ENCODE measurements at regions of chr1 and their contacts with region 1.

Region 1: GRCh38 chr1:70290218-70290617 is 64.3 kb downstream of the ANKRD13C start:
- DNase-seq: no peak

Region 2: DNA sequence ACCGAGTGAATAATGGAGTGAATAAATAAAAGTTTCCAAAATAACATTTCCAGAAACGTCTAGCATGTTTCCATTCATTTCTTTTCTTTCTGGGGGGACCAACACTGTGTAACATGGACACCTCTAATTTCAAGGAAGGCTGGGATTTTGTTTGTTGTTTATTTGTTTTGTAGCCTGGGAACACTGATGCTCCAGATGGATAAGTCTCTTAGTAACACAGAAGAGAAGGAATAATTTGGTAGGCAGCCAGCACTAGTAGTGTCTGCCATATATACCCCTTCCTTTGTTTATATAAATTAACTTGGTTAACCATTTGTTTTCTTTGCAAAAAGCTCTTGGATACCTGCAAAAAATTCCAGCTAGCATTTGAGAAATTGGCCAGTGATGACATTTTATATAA is 1381.9 kb before region 1 on chr1:
- intact Hi-C with region 1: loop called in 1 of 2 experiments (anchors 5 kb)
- DNase-seq: no peak

Region 3: DNA sequence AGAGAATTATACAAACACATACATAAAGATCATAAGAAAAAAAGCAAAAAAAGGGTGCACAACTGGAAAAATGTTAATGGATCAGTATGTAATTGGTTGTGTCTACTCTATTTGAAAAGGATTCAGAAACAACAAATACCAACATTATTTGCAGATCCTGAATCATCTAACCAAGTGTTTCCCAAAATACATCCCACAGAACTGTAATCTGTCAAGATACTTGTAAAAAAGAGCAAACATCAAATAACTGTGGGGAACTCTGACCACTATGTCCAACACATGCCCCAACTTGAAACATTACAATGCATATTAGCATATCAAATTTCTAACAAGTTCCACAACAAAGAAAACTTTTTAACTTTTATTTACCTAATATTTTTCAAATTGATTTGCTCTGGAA is 41.7 kb after region 1 on chr1:
- intact Hi-C with region 1: no loop called
- DNase-seq: no peak

Measured in posterior vena cava (tissue), 2 donors.